Common myeloid progenitor, CD34-positive (primary cell): ENCODE measurements at regions of chr1 and their contacts with region 1.

Region 1: GRCh38 chr1:1861339-1861730 is 29.6 kb downstream of the GNB1 start:
- DNase-seq: no peak
- H3K4me3 ChIP-seq: peak overlapping the region in 1 of 7 experiments; percentile 16
- H3K27ac ChIP-seq: no peak overlapping the region
- H3K4me1 ChIP-seq: peaks cover 0 to 43% (median 34%) of the 10 kb centered on the region in 4 experiments
- H3K27me3 ChIP-seq: no peaks in the 10 kb centered on the region

Region 2: GRCh38 chr1:1833916-1834325 is 27.4 kb before region 1 on chr1:
- CTCF ChIA-PET with region 1: no interaction called
- POLR2A ChIA-PET with region 1: no interaction called
- DNase-seq: no peak
- H3K4me3 ChIP-seq: no peak overlapping the region
- H3K27ac ChIP-seq: peak overlapping the region in 1 of 2 experiments; percentile 22
- H3K4me1 ChIP-seq: no peaks in the 10 kb centered on the region
- H3K27me3 ChIP-seq: no peaks in the 10 kb centered on the region

Region 3: DNA sequence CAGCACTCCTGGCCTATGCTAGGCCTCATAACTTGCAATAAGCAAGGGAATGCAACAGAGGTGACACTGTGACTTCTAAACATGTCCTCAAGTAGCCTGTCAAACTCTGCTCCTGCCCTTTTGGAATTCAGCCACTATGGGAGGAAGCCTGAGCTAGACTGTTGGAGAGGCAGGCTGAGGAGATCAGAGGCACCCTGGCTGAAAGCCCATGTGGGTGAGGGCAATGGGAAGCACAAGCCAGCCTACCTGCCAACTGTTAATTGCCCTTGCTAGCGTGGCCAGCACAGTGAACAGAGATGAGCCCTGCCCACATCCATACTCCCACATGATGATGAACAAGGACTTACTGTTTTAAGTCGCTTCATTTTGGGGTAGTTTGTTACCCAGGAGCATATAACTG is 11.9 kb after region 1 on chr1:
- CTCF ChIA-PET with region 1: interaction called, 15 read pairs
- POLR2A ChIA-PET with region 1: interaction called, 4 read pairs
- DNase-seq: no peak
- H3K4me3 ChIP-seq: no peak overlapping the region
- H3K27ac ChIP-seq: no peak overlapping the region
- H3K4me1 ChIP-seq: peaks cover 0 to 33% (median 19%) of the 10 kb centered on the region in 4 experiments
- H3K27me3 ChIP-seq: no peaks in the 10 kb centered on the region